ENCODE measurements at regions of chr5 and their contacts with region 1.

Region 1: GRCh38 chr5:79020861-79021561 is 35.9 kb upstream of the ARSB start:
- DNase-seq: peak; percentile 51 to 66
- H3K4me3 ChIP-seq: peak overlapping the region; percentile 7 to 24
- H3K27ac ChIP-seq: no peak overlapping the region
- H3K4me1 ChIP-seq: peaks cover 0 to 16% (median 5%) of the 10 kb centered on the region in 4 donors
- H3K27me3 ChIP-seq: peaks cover 0 to 2% of the 10 kb centered on the region in 2 donors
- CTCF ChIP-seq: peak; percentile 52 to 67

Region 2: GRCh38 chr5:79133657-79134451 is 112.8 kb after region 1 on chr5:
- intact Hi-C with region 1: loop called (anchors 2 kb)
- DNase-seq: peak; percentile 68 to 74
- H3K4me3 ChIP-seq: peak overlapping the region; percentile 27 to 32
- H3K27ac ChIP-seq: peak overlapping the region; percentile 48 to 79
- H3K4me1 ChIP-seq: peaks cover 0 to 10% (median 5%) of the 10 kb centered on the region in 4 donors
- H3K27me3 ChIP-seq: no peaks in the 10 kb centered on the region
- CTCF ChIP-seq: peak; percentile 54 to 72

Region 3: GRCh38 chr5:79464695-79465332 is 443.8 kb after region 1 on chr5:
- intact Hi-C with region 1: loop called (anchors 10 kb)
- DNase-seq: no peak
- H3K4me3 ChIP-seq: no peak overlapping the region
- H3K27ac ChIP-seq: no peak overlapping the region
- H3K4me1 ChIP-seq: no peaks in the 10 kb centered on the region
- H3K27me3 ChIP-seq: no peaks in the 10 kb centered on the region
- CTCF ChIP-seq: peak; percentile 40